ENCODE measurements at regions of chr16 and their contacts with region 1.

Region 1: DNA sequence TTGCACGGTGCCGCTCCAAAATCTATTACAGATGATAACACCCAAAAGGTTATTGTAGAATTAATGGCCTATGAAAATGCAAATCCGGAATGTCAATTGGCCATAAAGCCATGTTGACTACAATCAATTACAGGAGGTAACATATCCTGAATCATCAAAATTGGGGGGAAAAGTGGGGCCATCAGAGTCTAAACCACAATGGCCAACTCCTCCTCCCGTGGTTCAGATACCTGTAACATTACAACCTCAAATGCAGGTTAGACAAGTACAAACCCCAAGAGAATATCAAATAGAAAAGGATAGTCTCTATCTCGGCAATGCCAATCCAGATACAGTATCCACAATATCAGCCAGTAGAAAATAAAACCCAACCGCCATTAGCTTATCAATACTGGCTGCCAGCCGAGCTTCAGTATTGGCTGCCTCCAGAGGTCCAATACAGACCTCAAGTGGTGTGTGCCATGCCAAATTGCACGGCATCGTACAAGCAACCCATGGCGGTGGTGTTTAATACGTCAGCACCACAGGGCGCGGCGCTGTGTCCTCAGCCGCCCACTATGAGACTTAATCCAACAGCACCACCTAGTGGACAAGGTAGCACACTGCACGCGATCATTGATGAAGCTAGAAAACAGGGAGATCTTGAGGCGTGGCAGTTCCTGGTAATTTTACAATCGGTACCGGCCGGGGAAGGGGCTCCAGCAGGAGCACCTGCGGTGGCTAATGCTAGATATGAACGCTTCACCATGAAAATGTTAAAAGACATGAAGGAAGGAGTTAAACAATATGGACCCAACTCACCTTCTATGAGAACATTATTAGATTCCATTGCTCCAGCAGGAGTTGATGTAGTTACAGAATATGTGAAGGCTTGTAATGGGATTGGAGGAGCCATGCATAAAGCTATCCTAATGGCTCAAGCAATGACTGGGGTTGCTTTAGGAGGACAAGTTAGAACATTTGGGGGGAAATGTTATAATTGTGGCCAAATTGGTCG is 15.2 kb downstream of the FLYWCH1 start:
- DNase-seq: peak; percentile 93
- ATAC-seq: peak; percentile 99
- H3K4me3 Mint-ChIP-seq: no peak overlapping the region
- H3K27ac Mint-ChIP-seq: no peak overlapping the region
- H3K4me1 Mint-ChIP-seq: peaks cover 13% of the 10 kb centered on the region
- H3K27me3 Mint-ChIP-seq: no peaks in the 10 kb centered on the region

Region 2: GRCh38 chr16:2838928-2839327 is 88.0 kb before region 1 on chr16:
- CTCF ChIA-PET with region 1: interaction called, 10 read pairs
- DNase-seq: peak; percentile 74
- ATAC-seq: peak; percentile 82
- H3K4me3 Mint-ChIP-seq: no peak overlapping the region
- H3K27ac Mint-ChIP-seq: no peak overlapping the region
- H3K4me1 Mint-ChIP-seq: peaks cover 24% of the 10 kb centered on the region
- H3K27me3 Mint-ChIP-seq: peaks cover 5% of the 10 kb centered on the region

Region 3: GRCh38 chr16:2874912-2875362 is 52.0 kb before region 1 on chr16:
- CTCF ChIA-PET with region 1: interaction called, 30 read pairs
- DNase-seq: peak; percentile 81
- ATAC-seq: peak; percentile 100
- H3K4me3 Mint-ChIP-seq: no peak overlapping the region
- H3K27ac Mint-ChIP-seq: no peak overlapping the region
- H3K4me1 Mint-ChIP-seq: peaks cover 3% of the 10 kb centered on the region
- H3K27me3 Mint-ChIP-seq: no peaks in the 10 kb centered on the region

Region 4: DNA sequence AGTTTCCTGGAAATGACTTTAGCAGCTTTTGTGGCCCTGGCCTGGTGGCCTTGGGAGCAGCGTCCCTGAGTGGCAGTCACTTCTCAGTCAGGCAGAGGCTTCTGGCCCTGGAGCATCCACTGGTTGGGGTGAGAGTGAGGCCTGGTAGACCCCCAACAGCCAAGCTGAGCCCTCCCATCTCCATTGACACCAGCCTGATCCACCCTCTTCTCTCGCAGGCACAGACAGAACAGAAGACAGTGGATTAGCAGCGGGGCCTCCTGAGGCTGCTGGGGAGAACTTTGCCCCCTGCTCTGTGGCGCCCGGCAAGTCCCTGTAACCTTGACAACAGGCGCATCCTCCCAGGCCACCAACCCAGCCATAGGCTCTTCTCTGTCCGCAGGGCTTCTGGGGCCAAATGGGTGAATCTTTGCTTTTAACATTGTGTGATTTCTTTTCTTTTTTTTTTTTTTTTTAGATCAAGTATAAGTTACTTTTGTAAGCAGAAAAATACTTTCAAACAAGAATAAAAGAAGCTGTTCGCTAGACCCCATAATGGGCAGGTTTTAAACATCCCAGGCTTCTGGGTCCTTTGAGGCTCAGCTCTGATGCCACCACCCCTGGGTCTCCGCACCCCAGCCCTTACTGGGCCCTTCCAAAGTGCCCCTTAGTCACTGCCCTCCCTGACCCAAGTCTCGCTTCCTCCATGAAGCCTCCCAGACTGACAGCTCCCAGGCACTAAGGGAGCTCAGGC is 28.0 kb before region 1 on chr16:
- CTCF ChIA-PET with region 1: interaction called, 12 read pairs
- DNase-seq: no peak
- ATAC-seq: no peak
- H3K4me3 Mint-ChIP-seq: no peak overlapping the region
- H3K27ac Mint-ChIP-seq: no peak overlapping the region
- H3K4me1 Mint-ChIP-seq: peaks cover 4% of the 10 kb centered on the region
- H3K27me3 Mint-ChIP-seq: no peaks in the 10 kb centered on the region

Region 5: DNA sequence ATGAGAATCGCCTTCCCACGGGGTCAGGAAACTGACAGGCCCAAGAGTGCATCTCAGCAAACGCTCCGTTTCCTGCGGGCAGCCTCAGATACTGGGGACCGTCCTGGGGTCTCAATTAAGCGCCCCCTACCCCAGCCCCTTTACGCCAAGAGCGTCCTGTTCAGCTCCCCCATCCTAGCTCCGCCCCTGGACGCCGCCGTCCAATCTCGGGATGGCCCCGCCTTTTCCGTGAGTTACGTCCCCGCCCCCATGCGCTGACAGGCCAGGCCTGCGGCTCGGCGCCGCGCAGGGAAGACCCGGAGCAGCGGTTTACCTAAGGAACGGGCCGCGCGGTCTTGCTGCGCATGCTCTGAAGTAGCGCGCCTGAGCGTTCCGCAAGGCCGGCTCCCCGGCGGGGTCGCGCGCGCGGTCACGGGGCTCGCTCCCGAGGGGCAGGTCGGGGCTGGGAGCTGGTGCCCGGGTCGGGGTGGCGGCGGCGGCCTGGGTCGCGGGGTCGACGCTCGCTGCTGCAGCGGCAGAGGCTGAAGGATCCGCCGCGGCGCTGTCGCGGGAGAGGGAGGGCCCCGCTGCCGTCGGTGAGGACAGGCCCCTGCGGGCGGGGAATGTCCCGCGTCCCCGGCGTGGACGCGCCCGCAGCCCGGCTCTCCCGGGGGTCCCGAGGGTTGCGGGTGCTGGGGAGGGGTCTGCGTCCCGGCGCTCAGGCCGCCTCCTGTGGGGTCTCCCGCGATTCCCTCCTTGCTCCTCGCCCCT is 15.2 kb before region 1 on chr16 and contains the start of gene FLYWCH1:
- CTCF ChIA-PET with region 1: interaction called, 32 read pairs
- DNase-seq: peak; percentile 99
- ATAC-seq: peak; percentile 95
- H3K4me3 Mint-ChIP-seq: peak within 1 kb of the TSS; percentile 87
- H3K27ac Mint-ChIP-seq: peak within 1 kb of the TSS; percentile 74
- H3K4me1 Mint-ChIP-seq: peaks cover 33% of the 10 kb centered on the region
- H3K27me3 Mint-ChIP-seq: peaks cover 9% of the 10 kb centered on the region
- total RNA-seq, gene FLYWCH1: 52.7 to 58.1 TPM

Region 6: GRCh38 chr16:2948807-2949738 is 22.1 kb after region 1 on chr16:
- CTCF ChIA-PET with region 1: interaction called, 20 read pairs
- DNase-seq: no peak
- ATAC-seq: no peak
- H3K4me3 Mint-ChIP-seq: no peak overlapping the region
- H3K27ac Mint-ChIP-seq: no peak overlapping the region
- H3K4me1 Mint-ChIP-seq: no peaks in the 10 kb centered on the region
- H3K27me3 Mint-ChIP-seq: peaks cover 6% of the 10 kb centered on the region

Measured in activated CD8-positive, alpha-beta memory T cell treated with anti-CD3 and anti-CD28 coated beads, Interleukin-2, amount 10 ng/mL, durations not matched to agents 7 days and 5 days (primary cell).